ENCODE measurements at regions of chr5 and their contacts with region 1.

Region 1: GRCh38 chr5:91383027-91383955 is at the start of gene ARRDC3:
- DNase-seq: peak; percentile 95 to 98 (median 98)
- ATAC-seq: peak; percentile 58
- H3K4me3 ChIP-seq: peak within 1 kb of the TSS; percentile 81
- H3K4me3 Mint-ChIP-seq: peak within 1 kb of the TSS; percentile 93 to 100 (median 98)
- H3K27ac ChIP-seq: peak within 1 kb of the TSS; percentile 97
- H3K27ac Mint-ChIP-seq: peak within 1 kb of the TSS; percentile 97 to 100 (median 98)
- H3K4me1 ChIP-seq: peaks cover 17 to 19% of the 10 kb centered on the region in 2 donors
- H3K4me1 Mint-ChIP-seq: peaks cover 6 to 32% (median 24%) of the 10 kb centered on the region in 7 donors
- H3K27me3 ChIP-seq: no peaks in the 10 kb centered on the region
- H3K27me3 Mint-ChIP-seq: no peaks in the 10 kb centered on the region
- total RNA-seq, gene ARRDC3: 29.8 to 256 (median 172) TPM

Region 2: DNA sequence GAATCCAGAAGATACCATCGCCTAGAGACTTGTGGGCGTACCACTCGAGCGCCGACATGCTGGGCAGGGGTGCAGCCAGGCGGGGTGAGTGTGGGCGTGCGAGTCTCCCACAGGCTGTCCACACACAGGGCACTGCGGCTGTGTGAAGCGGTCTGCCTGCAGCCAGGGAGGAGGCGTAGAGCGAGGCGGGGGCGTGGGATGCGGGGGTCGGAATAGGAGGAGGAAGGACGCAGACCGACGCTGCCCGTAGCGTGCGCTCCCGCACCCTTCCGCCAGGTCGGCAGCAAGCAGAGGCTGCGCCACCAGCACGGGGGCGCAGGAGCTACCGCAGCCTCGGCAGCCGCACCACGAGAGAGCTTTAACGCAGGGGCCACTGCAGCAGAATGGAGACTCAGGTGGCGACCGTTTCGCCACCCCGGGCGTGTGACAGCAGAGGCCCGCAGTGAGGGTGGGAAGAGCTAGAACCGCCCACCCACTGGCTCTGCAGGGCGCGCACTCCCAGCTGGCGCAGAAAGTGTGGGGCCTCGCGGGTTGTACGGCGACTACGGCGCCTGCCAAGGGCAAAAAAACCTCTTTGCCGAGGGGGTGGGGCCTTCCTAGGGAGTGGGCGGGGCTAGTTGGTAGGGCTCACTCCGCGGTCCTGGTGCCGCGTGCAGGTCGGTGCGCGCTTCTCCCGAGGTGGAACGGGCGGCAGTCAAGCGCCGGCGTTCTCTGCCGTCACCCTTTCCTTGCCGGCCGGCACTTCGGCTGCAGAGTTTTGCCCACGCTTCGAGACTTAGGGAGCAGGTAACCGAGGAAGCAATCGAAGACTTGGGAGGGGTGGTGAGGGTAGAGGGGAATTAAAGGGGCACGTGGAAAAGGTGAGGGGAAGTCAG is 908.8 kb before region 1 on chr5 and contains the starts of genes MBLAC2 and POLR3G:
- CTCF ChIA-PET with region 1: no interaction called
- POLR2A ChIA-PET with region 1: interaction called, 16 read pairs
- intact Hi-C with region 1: loop called (anchors 1 kb)
- DNase-seq: peak; percentile 80 to 93 (median 92)
- ATAC-seq: peak; percentile 95
- H3K4me3 ChIP-seq: peak within 1 kb of the TSS; percentile 95
- H3K4me3 Mint-ChIP-seq: peak within 1 kb of the TSS; percentile 90 to 99 (median 98)
- H3K27ac ChIP-seq: peak within 1 kb of the TSS; percentile 76
- H3K27ac Mint-ChIP-seq: peak within 1 kb of the TSS; percentile 86 to 98 (median 94)
- H3K4me1 ChIP-seq: peaks cover 15 to 16% of the 10 kb centered on the region in 2 donors
- H3K4me1 Mint-ChIP-seq: peaks cover 18 to 51% (median 43%) of the 10 kb centered on the region in 7 donors
- H3K27me3 ChIP-seq: no peaks in the 10 kb centered on the region
- H3K27me3 Mint-ChIP-seq: no peaks in the 10 kb centered on the region
- total RNA-seq, gene MBLAC2: 5.2 to 17.6 (median 7.1) TPM
- total RNA-seq, gene POLR3G: 0.51 to 3.0 (median 1.5) TPM

Region 3: GRCh38 chr5:90932052-90932699 is 451.1 kb before region 1 on chr5:
- CTCF ChIA-PET with region 1: interaction called, 22 read pairs
- POLR2A ChIA-PET with region 1: interaction called, 22 read pairs
- intact Hi-C with region 1: loop called (anchors 1 kb)
- DNase-seq: peak in 6 of 9 donors; percentile 27 to 46 (median 31)
- ATAC-seq: no peak
- H3K4me3 ChIP-seq: no peak overlapping the region
- H3K4me3 Mint-ChIP-seq: no peak overlapping the region
- H3K27ac ChIP-seq: no peak overlapping the region
- H3K27ac Mint-ChIP-seq: no peak overlapping the region
- H3K4me1 ChIP-seq: no peaks in the 10 kb centered on the region
- H3K4me1 Mint-ChIP-seq: peaks cover 0 to 5% (median 0%) of the 10 kb centered on the region in 7 donors
- H3K27me3 ChIP-seq: peaks cover 0 to 3% of the 10 kb centered on the region in 2 donors
- H3K27me3 Mint-ChIP-seq: peaks cover 3 to 14% (median 8%) of the 10 kb centered on the region in 5 donors

Region 4: GRCh38 chr5:91214561-91214960 is 168.7 kb before region 1 on chr5:
- CTCF ChIA-PET with region 1: interaction called, 180 read pairs
- POLR2A ChIA-PET with region 1: interaction called, 12 read pairs
- intact Hi-C with region 1: no loop called
- DNase-seq: no peak
- ATAC-seq: no peak
- H3K4me3 ChIP-seq: no peak overlapping the region
- H3K4me3 Mint-ChIP-seq: no peak overlapping the region
- H3K27ac ChIP-seq: no peak overlapping the region
- H3K27ac Mint-ChIP-seq: no peak overlapping the region
- H3K4me1 ChIP-seq: no peaks in the 10 kb centered on the region
- H3K4me1 Mint-ChIP-seq: no peaks in the 10 kb centered on the region
- H3K27me3 ChIP-seq: no peaks in the 10 kb centered on the region
- H3K27me3 Mint-ChIP-seq: peaks cover 0 to 13% (median 0%) of the 10 kb centered on the region in 5 donors

Region 5: GRCh38 chr5:91245871-91246270 is 137.4 kb before region 1 on chr5:
- CTCF ChIA-PET with region 1: interaction called, 14 read pairs
- POLR2A ChIA-PET with region 1: interaction called, 6 read pairs
- intact Hi-C with region 1: loop called in 1 of 2 experiments (anchors 1 kb)
- DNase-seq: no peak
- ATAC-seq: no peak
- H3K4me3 ChIP-seq: no peak overlapping the region
- H3K4me3 Mint-ChIP-seq: no peak overlapping the region
- H3K27ac ChIP-seq: no peak overlapping the region
- H3K27ac Mint-ChIP-seq: no peak overlapping the region
- H3K4me1 ChIP-seq: no peaks in the 10 kb centered on the region
- H3K4me1 Mint-ChIP-seq: peaks cover 0 to 3% (median 0%) of the 10 kb centered on the region in 7 donors
- H3K27me3 ChIP-seq: no peaks in the 10 kb centered on the region
- H3K27me3 Mint-ChIP-seq: peaks cover 0 to 6% (median 3%) of the 10 kb centered on the region in 5 donors

Region 6: DNA sequence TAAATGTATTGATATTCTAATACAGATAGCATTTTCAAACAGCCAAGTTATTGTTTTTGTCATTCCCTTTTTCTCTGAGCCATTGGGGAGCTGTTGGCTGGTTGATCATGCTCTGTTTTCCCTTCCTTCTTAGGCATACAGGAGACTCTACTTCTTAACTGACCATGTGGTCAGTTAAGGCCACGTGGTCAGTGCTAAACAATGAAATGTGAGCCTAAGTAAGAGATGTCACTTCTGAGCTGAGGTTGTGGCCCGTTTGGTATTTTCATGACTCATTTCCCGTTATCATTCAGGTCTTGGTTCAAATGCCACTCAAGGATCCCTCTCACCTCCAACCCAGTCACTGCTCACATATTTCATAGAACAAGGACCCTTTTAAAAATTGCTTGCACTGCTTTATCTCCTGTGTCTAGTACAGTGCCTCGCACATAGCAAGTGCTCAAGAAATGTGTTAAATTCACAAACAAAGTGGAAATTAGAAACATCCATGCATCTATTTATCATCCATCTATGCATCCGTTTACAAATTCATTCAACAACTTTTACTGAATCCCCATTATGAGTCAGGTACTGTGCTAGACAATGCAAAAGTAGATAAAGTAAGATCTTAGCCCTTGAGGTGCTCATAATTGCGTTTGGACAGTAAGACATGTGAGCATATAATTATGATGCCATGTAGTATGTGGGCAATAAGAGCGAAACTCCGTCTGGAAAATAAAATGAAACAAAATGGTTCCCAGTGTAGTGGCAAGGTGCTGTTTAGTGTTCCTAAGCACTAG is 50.8 kb before region 1 on chr5:
- CTCF ChIA-PET with region 1: interaction called, 3 read pairs
- POLR2A ChIA-PET with region 1: interaction called, 5 read pairs
- intact Hi-C with region 1: loop called in 1 of 2 experiments (anchors 5 kb)
- DNase-seq: no peak
- ATAC-seq: peak; percentile 56
- H3K4me3 ChIP-seq: no peak overlapping the region
- H3K4me3 Mint-ChIP-seq: peak overlapping the region in 1 of 10 donors; percentile 9
- H3K27ac ChIP-seq: no peak overlapping the region
- H3K27ac Mint-ChIP-seq: peak overlapping the region in 2 of 9 donors; percentile 10 to 53
- H3K4me1 ChIP-seq: peaks cover 0 to 3% of the 10 kb centered on the region in 2 donors
- H3K4me1 Mint-ChIP-seq: peaks cover 0 to 28% (median 9%) of the 10 kb centered on the region in 7 donors
- H3K27me3 ChIP-seq: no peaks in the 10 kb centered on the region
- H3K27me3 Mint-ChIP-seq: peaks cover 0 to under 1% (median 0%) of the 10 kb centered on the region in 5 donors

Measured in naive thymus-derived CD4-positive, alpha-beta T cell (primary cell).